Activated CD4-positive, alpha-beta T cell treated with anti-CD3 and anti-CD28 coated beads, Interleukin-2, amount 10 ng/mL, durations not matched to agents 7 days and 5 days (primary cell): ENCODE measurements at regions of chr17 and their contacts with region 1.

Region 1: DNA sequence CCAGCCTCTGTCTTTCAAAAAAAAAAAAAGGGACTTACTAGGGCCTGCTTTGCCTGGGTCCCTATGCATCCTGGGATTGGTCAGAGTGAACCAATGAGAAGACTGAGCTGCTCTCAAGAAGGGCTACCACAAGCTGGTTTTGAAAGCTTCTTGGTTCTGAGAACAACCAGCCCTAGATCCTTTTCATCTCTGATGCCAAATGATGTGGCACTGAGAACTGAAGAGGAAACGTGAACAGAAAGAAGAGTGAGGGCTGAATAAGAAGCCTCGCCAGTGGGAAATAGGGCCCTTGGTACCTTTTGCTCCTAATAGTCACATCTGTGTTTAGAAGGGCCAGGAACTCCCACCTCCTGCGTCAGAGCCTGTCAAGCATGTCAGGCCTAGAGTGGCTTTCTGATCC is 10.7 kb downstream of the TACO1 start:
- DNase-seq: peak; percentile 61
- H3K4me3 Mint-ChIP-seq: peak overlapping the region; percentile 67
- H3K27ac Mint-ChIP-seq: peak overlapping the region; percentile 98
- H3K4me1 Mint-ChIP-seq: peaks cover 34% of the 10 kb centered on the region
- H3K27me3 Mint-ChIP-seq: no peaks in the 10 kb centered on the region

Region 2: GRCh38 chr17:63425482-63425881 is 185.9 kb before region 1 on chr17:
- CTCF ChIA-PET with region 1: interaction called, 48 read pairs
- POLR2A ChIA-PET with region 1: no interaction called
- DNase-seq: peak; percentile 81
- H3K4me3 Mint-ChIP-seq: no peak overlapping the region
- H3K27ac Mint-ChIP-seq: no peak overlapping the region
- H3K4me1 Mint-ChIP-seq: peaks cover 53% of the 10 kb centered on the region
- H3K27me3 Mint-ChIP-seq: peaks cover 2% of the 10 kb centered on the region

Region 3: DNA sequence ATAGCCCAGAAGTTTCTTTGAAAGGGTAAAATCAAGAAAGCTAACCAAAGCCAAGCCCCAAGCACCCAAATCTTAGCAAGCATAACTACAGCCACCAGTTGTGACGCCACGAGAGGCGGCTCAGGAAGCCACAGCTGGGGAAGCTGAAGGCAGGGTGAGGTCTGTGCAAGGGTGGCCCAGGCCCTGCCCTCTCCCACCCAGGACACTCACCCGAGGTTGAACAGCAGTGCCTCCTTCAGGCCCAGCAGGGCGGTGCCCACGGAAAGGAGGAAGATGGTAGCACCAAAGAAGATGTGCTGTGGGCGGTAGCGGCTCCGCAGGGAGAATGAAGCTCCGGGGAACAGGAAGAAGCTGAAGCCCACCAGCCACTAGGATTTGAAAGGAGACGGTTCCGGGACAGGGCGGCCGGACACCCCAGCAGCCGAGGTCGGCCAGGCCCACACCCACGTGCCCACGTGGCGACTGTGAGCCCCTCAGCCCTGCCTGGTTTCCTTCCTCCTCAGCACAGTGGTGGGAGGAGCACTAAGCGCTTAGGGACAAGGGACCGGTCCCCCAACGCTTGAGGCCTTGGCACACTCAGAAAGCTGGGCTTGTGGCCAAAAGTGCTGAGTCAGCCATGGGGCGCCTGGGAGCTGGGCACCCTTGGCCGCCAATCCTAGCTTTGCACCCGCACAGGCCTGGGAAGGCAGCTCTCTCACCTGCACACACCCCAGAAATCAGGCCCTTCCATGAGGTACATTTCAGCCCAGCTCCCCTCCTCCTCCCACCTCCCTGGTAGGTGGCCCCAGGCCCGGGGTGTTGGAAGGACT is 176.3 kb before region 1 on chr17:
- CTCF ChIA-PET with region 1: interaction called, 23 read pairs
- POLR2A ChIA-PET with region 1: no interaction called
- DNase-seq: peak; percentile 75
- H3K4me3 Mint-ChIP-seq: no peak overlapping the region
- H3K27ac Mint-ChIP-seq: peak overlapping the region; percentile 88
- H3K4me1 Mint-ChIP-seq: peaks cover 62% of the 10 kb centered on the region
- H3K27me3 Mint-ChIP-seq: no peaks in the 10 kb centered on the region

Region 4: GRCh38 chr17:63478791-63479494 is 132.4 kb before region 1 on chr17:
- CTCF ChIA-PET with region 1: interaction called, 13 read pairs
- POLR2A ChIA-PET with region 1: no interaction called
- DNase-seq: peak; percentile 86
- H3K4me3 Mint-ChIP-seq: no peak overlapping the region
- H3K27ac Mint-ChIP-seq: no peak overlapping the region
- H3K4me1 Mint-ChIP-seq: peaks cover 20% of the 10 kb centered on the region
- H3K27me3 Mint-ChIP-seq: peaks cover 40% of the 10 kb centered on the region

Region 5: DNA sequence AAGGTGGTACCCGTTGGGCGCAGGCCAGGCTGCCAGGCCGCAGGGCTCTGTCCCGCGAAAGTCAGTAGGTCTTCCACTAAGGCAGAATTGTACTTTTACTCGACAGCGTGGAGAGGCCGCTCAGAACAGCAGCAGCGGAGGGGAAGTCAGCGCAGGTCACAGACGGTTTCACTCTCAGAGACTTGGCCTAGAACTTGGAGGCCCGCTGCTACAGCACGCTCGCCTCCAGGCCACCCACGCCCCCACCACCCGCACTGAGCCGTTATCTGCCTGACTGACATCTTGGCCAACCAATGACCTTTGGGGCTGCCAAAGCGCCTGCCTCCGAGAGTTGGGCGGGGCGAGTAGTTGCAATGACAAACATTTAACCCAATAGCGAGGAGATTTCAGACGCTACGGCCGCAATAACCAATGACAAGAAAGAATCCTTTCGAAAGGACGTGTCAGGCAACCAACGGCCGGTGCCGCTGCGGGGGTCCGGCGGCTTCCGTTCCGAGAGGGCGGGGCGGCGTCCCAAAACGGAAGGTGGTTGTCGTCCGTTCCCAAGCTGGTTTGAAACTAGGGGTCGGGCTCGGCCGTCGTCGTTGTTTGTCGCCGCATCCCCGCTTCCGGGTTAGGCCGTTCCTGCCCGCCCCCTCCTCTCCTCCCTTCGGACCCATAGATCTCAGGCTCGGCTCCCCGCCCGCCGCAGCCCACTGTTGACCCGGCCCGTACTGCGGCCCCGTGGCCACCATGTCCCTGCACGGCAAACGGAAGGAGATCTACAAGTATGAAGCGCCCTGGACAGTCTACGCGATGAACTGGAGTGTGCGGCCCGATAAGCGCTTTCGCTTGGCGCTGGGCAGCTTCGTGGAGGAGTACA is 61.2 kb before region 1 on chr17 and contains the start of gene DCAF7:
- CTCF ChIA-PET with region 1: interaction called, 10 read pairs
- POLR2A ChIA-PET with region 1: interaction called, 4 read pairs
- DNase-seq: peak; percentile 100
- H3K4me3 Mint-ChIP-seq: peak within 1 kb of the TSS; percentile 92
- H3K27ac Mint-ChIP-seq: peak within 1 kb of the TSS; percentile 97
- H3K4me1 Mint-ChIP-seq: peaks cover 34% of the 10 kb centered on the region
- H3K27me3 Mint-ChIP-seq: no peaks in the 10 kb centered on the region
- total RNA-seq, gene DCAF7: 135 to 139 TPM

Region 6: GRCh38 chr17:63621766-63622519 is 10.6 kb after region 1 on chr17 and contains the start of gene MAP3K3:
- CTCF ChIA-PET with region 1: interaction called, 46 read pairs
- POLR2A ChIA-PET with region 1: interaction called, 7 read pairs
- DNase-seq: peak; percentile 99
- H3K4me3 Mint-ChIP-seq: peak within 1 kb of the TSS; percentile 95
- H3K27ac Mint-ChIP-seq: peak within 1 kb of the TSS; percentile 95
- H3K4me1 Mint-ChIP-seq: peaks cover 35% of the 10 kb centered on the region
- H3K27me3 Mint-ChIP-seq: peaks cover 4% of the 10 kb centered on the region
- total RNA-seq, gene MAP3K3: 38.7 to 40.3 TPM